GM12878 (cell line): ENCODE measurements at regions of chr20 and their contacts with region 1.

Region 1: GRCh38 chr20:36439040-36439730 is 102.1 kb upstream of the MYL9 start:
- DNase-seq: no peak
- ATAC-seq: peak; percentile 88
- H3K4me3 ChIP-seq: no peak overlapping the region
- H3K27ac ChIP-seq: no peak overlapping the region
- H3K4me1 ChIP-seq: no peaks in the 10 kb centered on the region
- H3K27me3 ChIP-seq: no peaks in the 10 kb centered on the region
- CTCF ChIP-seq: peak; percentile 89 to 95 (median 89)
- EP300 ChIP-seq: no peak
- POLR2A ChIP-seq: no peak
- RAD21 ChIP-seq: peak; percentile 89

Region 2: DNA sequence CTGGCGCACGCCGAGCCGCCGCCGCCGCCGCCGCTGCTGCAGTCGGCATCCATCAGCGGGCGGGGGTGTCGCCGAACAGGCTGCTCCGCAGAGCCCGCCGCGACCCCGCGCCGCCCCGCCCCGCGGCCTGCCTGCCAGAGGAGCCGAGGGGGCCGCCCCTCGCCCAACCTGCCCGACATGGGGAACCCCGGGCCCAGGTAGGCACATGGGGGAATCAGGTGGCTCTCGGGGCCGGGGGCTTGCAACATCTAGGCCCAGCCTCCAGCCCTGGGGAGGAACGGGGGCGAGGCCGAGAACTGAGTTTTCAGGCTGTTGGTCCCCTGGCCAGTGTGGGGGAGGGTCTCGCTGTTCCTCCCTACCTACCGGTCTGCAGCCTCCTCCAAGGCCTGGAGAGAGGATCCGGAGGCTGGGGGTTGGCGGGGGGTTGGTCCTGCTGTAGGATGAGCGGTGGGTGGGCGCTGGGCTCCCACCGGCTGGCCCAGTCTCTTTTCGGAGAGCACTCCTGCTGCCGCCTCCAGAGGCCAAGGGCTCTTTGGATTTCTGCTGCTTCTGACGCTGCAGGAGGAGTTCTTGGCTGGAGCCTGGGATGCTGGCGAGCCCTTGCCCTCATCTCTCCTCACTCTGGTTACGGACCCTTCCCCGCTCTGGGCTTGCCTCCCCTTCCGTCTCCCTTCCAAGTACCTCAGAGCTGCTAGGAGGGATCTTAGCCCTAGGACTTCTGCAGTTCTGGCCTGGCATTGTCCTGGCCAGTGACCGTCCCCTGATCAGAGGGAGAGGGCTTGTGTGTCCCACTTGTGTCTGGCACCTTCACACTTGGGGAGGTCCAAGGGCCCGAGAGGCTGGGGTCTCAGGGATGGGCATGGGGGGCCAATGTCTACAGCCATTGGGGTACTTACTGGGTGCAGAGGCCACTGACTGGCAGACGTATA is 284.2 kb before region 1 on chr20 and contains the start of gene EPB41L1:
- CTCF ChIA-PET with region 1: interaction called, 5 read pairs
- POLR2A ChIA-PET with region 1: no interaction called
- RAD21 ChIA-PET with region 1: interaction called, 5 read pairs
- SMC1A ChIA-PET with region 1: no interaction called
- in situ Hi-C with region 1: no loop called
- intact Hi-C with region 1: loop called (anchors 5 kb)
- DNase-seq: no peak
- ATAC-seq: no peak
- H3K4me3 ChIP-seq: no peak within 1 kb of the TSS
- H3K27ac ChIP-seq: no peak within 1 kb of the TSS
- H3K4me1 ChIP-seq: no peaks in the 10 kb centered on the region
- H3K27me3 ChIP-seq: peaks cover 7 to 10% of the 10 kb centered on the region in 2 experiments; a peak in 3 of 4 replicates
- CTCF ChIP-seq: no peak
- EP300 ChIP-seq: no peak
- POLR2A ChIP-seq: no peak
- RAD21 ChIP-seq: no peak
- polyA plus RNA-seq, gene EPB41L1: 0.08 to 0.16 TPM

Region 3: GRCh38 chr20:36214684-36215256 is 224.4 kb before region 1 on chr20:
- CTCF ChIA-PET with region 1: interaction called, 25 read pairs
- POLR2A ChIA-PET with region 1: no interaction called
- RAD21 ChIA-PET with region 1: interaction called, 9 read pairs
- SMC1A ChIA-PET with region 1: interaction called, 14 read pairs
- in situ Hi-C with region 1: no loop called
- intact Hi-C with region 1: loop called (anchors 1 kb)
- DNase-seq: no peak
- ATAC-seq: peak; percentile 85
- H3K4me3 ChIP-seq: no peak overlapping the region
- H3K27ac ChIP-seq: no peak overlapping the region
- H3K4me1 ChIP-seq: no peaks in the 10 kb centered on the region; the same call in 1 of the 2 replicates
- H3K27me3 ChIP-seq: no peaks in the 10 kb centered on the region; a peak in 2 of 4 replicates
- CTCF ChIP-seq: peak; percentile 66 to 82 (median 74)
- EP300 ChIP-seq: no peak
- POLR2A ChIP-seq: no peak
- RAD21 ChIP-seq: peak; percentile 77

Region 4: GRCh38 chr20:36273414-36274180 is 165.6 kb before region 1 on chr20:
- CTCF ChIA-PET with region 1: interaction called, 34 read pairs
- POLR2A ChIA-PET with region 1: no interaction called
- RAD21 ChIA-PET with region 1: interaction called, 13 read pairs
- SMC1A ChIA-PET with region 1: interaction called, 13 read pairs
- in situ Hi-C with region 1: no loop called
- intact Hi-C with region 1: loop called (anchors 5 kb)
- DNase-seq: no peak
- ATAC-seq: peak; percentile 68
- H3K4me3 ChIP-seq: no peak overlapping the region
- H3K27ac ChIP-seq: no peak overlapping the region
- H3K4me1 ChIP-seq: no peaks in the 10 kb centered on the region
- H3K27me3 ChIP-seq: peaks cover 0 to 3% of the 10 kb centered on the region in 2 experiments; a peak in 2 of 4 replicates
- CTCF ChIP-seq: peak; percentile 37 to 47 (median 43); a peak in 5 of 6 replicates
- EP300 ChIP-seq: no peak
- POLR2A ChIP-seq: no peak
- RAD21 ChIP-seq: peak; percentile 27; the same call in 1 of the 2 replicates

Region 5: GRCh38 chr20:36399147-36399968 is 39.8 kb before region 1 on chr20:
- CTCF ChIA-PET with region 1: interaction called, 15 read pairs
- POLR2A ChIA-PET with region 1: no interaction called
- RAD21 ChIA-PET with region 1: no interaction called
- SMC1A ChIA-PET with region 1: no interaction called
- in situ Hi-C with region 1: no loop called
- intact Hi-C with region 1: no loop called
- DNase-seq: no peak
- ATAC-seq: peak; percentile 85
- H3K4me3 ChIP-seq: no peak overlapping the region
- H3K27ac ChIP-seq: no peak overlapping the region
- H3K4me1 ChIP-seq: no peaks in the 10 kb centered on the region
- H3K27me3 ChIP-seq: no peaks in the 10 kb centered on the region
- CTCF ChIP-seq: peak; percentile 40 to 55 (median 40); a peak in 5 of 6 replicates
- EP300 ChIP-seq: no peak
- POLR2A ChIP-seq: no peak
- RAD21 ChIP-seq: peak; percentile 47; the same call in 1 of the 2 replicates

Region 6: DNA sequence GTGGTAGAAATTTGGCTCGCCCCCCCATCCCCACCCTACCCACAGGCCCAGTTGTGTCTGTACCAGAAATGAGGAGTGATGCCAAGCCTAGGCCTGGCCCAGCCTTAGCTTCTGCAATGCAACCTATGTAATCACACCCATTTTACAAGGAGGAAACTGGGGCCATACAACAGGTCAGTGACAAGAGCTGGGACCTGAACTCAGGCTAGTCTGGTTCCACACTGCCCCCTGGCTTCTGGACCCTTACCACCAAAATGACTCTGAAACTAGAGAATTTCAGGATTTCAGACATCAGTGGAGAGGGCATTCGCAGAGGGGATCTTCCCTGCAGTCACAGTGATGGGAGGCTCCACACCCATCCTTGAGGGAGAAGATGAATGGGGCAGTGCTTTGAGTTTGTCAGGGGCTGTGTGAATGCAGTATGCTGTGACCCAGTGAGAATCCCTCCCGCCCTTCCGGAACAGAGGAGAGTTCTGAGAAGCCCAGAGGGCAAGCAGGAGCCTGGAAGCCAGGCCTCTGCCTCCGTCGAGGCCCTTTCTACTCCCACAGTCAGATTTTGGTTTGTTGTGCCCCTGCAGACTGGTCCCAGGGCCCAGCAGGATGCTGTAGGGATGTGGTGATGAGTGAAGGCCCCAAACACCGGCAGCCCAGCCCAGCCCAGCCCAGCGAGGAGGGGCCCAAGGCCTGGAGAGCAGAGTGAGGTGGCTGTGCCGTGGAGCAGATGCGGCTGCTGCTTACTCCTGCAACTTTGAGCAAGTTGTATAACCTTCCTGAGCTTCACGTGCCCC is 54.0 kb after region 1 on chr20:
- CTCF ChIA-PET with region 1: interaction called, 10 read pairs
- POLR2A ChIA-PET with region 1: no interaction called
- RAD21 ChIA-PET with region 1: interaction called, 5 read pairs
- SMC1A ChIA-PET with region 1: interaction called, 7 read pairs
- in situ Hi-C with region 1: no loop called
- intact Hi-C with region 1: no loop called
- DNase-seq: no peak
- ATAC-seq: peak; percentile 42
- H3K4me3 ChIP-seq: no peak overlapping the region
- H3K27ac ChIP-seq: peak overlapping the region; percentile 59; the same call in 1 of the 2 replicates
- H3K4me1 ChIP-seq: peaks cover 21% of the 10 kb centered on the region
- H3K27me3 ChIP-seq: no peaks in the 10 kb centered on the region
- CTCF ChIP-seq: peak; percentile 21 to 51 (median 48); a peak in 4 of 6 replicates
- EP300 ChIP-seq: no peak
- POLR2A ChIP-seq: no peak
- RAD21 ChIP-seq: peak; percentile 52